CD4-positive, alpha-beta memory T cell (primary cell): ENCODE measurements at regions of chr4 and their contacts with region 1.

Region 1: GRCh38 chr4:121252224-121252806 is 88.2 kb upstream of the TNIP3 start:
- DNase-seq: peak in 4 of 5 donors; percentile 33 to 50 (median 44)
- H3K4me3 ChIP-seq: no peak overlapping the region
- H3K4me3 Mint-ChIP-seq: no peak overlapping the region
- H3K27ac ChIP-seq: no peak overlapping the region
- H3K27ac Mint-ChIP-seq: peak overlapping the region in 4 of 7 donors; percentile 14 to 63 (median 47)
- H3K4me1 ChIP-seq: peaks cover 47% of the 10 kb centered on the region
- H3K4me1 Mint-ChIP-seq: peaks cover 37 to 49% (median 43%) of the 10 kb centered on the region in 4 donors
- H3K27me3 ChIP-seq: no peaks in the 10 kb centered on the region
- H3K27me3 Mint-ChIP-seq: no peaks in the 10 kb centered on the region

Region 2: DNA sequence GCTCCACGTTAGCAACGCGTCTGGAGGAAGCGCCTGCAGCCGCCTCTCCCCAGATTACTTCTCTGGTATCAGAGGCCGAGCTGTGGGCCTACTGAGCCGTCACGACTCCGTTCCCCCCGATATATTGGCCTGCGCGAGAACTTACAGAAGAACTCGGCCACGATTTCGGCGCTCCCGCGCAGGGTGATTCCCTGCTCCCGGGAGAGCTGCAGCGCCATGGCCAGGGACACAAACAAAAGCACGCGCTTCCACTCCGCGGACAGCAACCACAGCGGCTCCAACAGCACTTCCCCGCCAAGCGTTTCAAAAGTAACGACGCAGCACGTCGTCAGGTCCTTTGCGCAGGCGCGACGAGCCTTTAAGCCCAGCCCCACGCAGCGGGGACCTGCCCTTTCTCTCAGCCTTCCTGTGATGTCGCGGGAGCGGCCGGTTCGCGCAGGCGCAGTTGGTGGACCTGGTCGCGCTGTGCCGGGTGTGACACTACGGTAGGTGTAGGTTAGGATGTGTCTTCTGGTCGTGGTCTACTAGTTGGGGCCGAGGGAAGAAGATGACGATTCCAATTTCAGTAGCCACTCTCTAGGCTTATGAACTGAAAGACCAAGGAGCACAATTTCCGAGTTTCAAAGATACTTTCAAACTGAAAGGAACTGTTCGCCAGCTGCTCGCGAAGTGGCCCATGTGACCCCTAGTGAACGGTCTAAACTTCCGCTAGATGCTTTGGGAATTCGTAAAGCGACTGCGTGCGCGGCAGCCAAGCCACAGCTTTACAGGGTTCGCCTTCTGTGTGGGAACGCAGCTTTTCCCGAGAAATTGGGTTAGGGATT is 1185.6 kb before region 1 on chr4 and contains the start of gene MAD2L1:
- CTCF ChIA-PET with region 1: no interaction called
- POLR2A ChIA-PET with region 1: no interaction called
- intact Hi-C with region 1: loop called (anchors 2 kb)
- DNase-seq: peak; percentile 98 to 99 (median 99)
- H3K4me3 ChIP-seq: peak within 1 kb of the TSS; percentile 83 to 94
- H3K4me3 Mint-ChIP-seq: peak within 1 kb of the TSS; percentile 89 to 99 (median 96)
- H3K27ac ChIP-seq: peak within 1 kb of the TSS; percentile 98
- H3K27ac Mint-ChIP-seq: peak within 1 kb of the TSS; percentile 96 to 99 (median 99)
- H3K4me1 ChIP-seq: peaks cover 55% of the 10 kb centered on the region
- H3K4me1 Mint-ChIP-seq: peaks cover 39 to 75% (median 52%) of the 10 kb centered on the region in 4 donors
- H3K27me3 ChIP-seq: no peaks in the 10 kb centered on the region
- H3K27me3 Mint-ChIP-seq: no peaks in the 10 kb centered on the region
- total RNA-seq, gene MAD2L1: 8.0 to 9.9 TPM

Region 3: DNA sequence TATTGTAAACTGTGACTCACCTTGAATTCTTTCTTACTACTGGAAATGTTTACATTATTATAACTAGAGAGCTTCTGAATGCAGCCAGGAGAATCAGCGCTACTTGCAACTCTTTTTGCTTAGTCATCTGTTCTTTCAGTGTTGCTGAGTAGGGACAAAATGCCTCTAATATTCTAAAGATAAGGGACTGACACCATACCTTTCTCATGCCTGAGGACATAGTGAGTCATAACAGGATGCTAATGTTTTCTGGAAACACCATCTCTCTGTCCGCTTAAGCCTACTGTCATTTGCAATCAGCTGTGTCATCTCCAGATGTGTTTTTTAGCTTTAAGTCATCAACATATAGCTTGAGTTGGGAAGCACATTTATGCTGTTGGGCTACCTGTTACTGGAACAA is 20.2 kb after region 1 on chr4:
- CTCF ChIA-PET with region 1: interaction called, 12 read pairs
- POLR2A ChIA-PET with region 1: interaction called, 4 read pairs
- intact Hi-C with region 1: no loop called
- DNase-seq: no peak
- H3K4me3 ChIP-seq: no peak overlapping the region
- H3K4me3 Mint-ChIP-seq: no peak overlapping the region
- H3K27ac ChIP-seq: no peak overlapping the region
- H3K27ac Mint-ChIP-seq: no peak overlapping the region
- H3K4me1 ChIP-seq: no peaks in the 10 kb centered on the region
- H3K4me1 Mint-ChIP-seq: peaks cover 6 to 8% (median 7%) of the 10 kb centered on the region in 4 donors
- H3K27me3 ChIP-seq: no peaks in the 10 kb centered on the region
- H3K27me3 Mint-ChIP-seq: no peaks in the 10 kb centered on the region

Region 4: DNA sequence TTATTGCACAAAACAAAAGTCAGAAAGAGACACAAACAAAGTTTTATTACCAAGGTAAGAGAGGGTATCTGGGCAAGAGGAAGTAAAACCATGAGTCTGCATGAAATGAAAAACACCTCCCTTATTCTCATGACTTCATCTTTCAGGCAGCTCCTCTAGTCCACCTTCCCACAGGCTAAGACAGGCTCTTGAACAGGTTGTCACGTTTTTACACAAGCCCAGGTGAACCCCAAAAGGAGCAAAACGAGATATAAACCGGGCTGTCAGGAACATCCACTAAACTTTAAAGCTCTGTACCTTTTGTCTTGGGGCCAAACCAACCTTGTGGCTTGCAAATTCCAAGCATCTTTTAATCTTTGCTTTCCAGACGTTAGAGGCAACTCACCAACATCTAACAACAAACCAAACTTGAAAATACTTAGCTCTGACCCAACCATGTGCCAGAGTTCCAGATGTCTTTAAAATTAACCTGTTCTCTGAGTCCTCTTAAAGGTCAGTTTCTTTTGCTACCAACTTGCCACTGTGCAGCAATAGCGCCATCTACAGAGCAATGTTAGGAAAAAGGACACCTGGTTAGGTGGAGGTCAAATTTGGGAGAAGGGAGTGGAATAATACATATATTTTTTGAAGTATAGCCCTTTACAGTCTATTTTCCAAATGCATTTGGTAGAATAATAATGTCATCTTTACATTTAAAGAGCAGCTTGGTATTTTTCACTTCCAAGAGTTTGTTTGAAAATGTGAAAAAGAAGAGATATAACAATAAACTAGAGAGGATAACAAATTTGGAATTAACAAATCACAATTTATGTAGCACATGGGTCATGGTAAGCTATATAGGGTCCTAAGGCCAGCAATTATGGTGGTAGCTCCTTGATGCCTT is 55.4 kb after region 1 on chr4:
- CTCF ChIA-PET with region 1: interaction called, 23 read pairs
- POLR2A ChIA-PET with region 1: interaction called, 5 read pairs
- intact Hi-C with region 1: loop called (anchors 2 kb)
- DNase-seq: peak; percentile 44 to 53 (median 45)
- H3K4me3 ChIP-seq: no peak overlapping the region
- H3K4me3 Mint-ChIP-seq: peak overlapping the region in 1 of 8 donors; percentile 17
- H3K27ac ChIP-seq: no peak overlapping the region
- H3K27ac Mint-ChIP-seq: peak overlapping the region in 2 of 7 donors; percentile 29 to 73
- H3K4me1 ChIP-seq: peaks cover 6% of the 10 kb centered on the region
- H3K4me1 Mint-ChIP-seq: peaks cover 9 to 15% (median 13%) of the 10 kb centered on the region in 4 donors
- H3K27me3 ChIP-seq: no peaks in the 10 kb centered on the region
- H3K27me3 Mint-ChIP-seq: peaks cover 0 to 3% of the 10 kb centered on the region in 2 donors